Motor neuron (in vitro differentiated cells): ENCODE measurements at regions of chr15 and their contacts with region 1.

Region 1: GRCh38 chr15:78618490-78618934 is 2.3 kb downstream of the CHRNA3 start:
- ATAC-seq: peak; percentile 20 to 78 (median 66)
- H3K4me3 ChIP-seq: no peak overlapping the region
- H3K27ac ChIP-seq: no peak overlapping the region
- H3K4me1 ChIP-seq: peaks cover 3 to 7% of the 10 kb centered on the region in 2 donors

Region 2: GRCh38 chr15:78709263-78709882 is 90.9 kb after region 1 on chr15:
- in situ Hi-C with region 1: loop called in 6 of 9 experiments (anchors 5 to 25 kb)
- ATAC-seq: peak; percentile 97 to 100 (median 99)
- H3K4me3 ChIP-seq: no peak overlapping the region
- H3K27ac ChIP-seq: no peak overlapping the region
- H3K4me1 ChIP-seq: peaks cover 0 to 3% of the 10 kb centered on the region in 2 donors

Region 3: GRCh38 chr15:78714890-78715289 is 96.4 kb after region 1 on chr15:
- in situ Hi-C with region 1: loop called in 4 of 9 experiments (anchors 10 to 25 kb)
- ATAC-seq: peak in 3 of 8 experiments; percentile 42 to 51 (median 49)
- H3K4me3 ChIP-seq: no peak overlapping the region
- H3K27ac ChIP-seq: no peak overlapping the region
- H3K4me1 ChIP-seq: peaks cover 0 to 4% of the 10 kb centered on the region in 2 donors

Region 4: DNA sequence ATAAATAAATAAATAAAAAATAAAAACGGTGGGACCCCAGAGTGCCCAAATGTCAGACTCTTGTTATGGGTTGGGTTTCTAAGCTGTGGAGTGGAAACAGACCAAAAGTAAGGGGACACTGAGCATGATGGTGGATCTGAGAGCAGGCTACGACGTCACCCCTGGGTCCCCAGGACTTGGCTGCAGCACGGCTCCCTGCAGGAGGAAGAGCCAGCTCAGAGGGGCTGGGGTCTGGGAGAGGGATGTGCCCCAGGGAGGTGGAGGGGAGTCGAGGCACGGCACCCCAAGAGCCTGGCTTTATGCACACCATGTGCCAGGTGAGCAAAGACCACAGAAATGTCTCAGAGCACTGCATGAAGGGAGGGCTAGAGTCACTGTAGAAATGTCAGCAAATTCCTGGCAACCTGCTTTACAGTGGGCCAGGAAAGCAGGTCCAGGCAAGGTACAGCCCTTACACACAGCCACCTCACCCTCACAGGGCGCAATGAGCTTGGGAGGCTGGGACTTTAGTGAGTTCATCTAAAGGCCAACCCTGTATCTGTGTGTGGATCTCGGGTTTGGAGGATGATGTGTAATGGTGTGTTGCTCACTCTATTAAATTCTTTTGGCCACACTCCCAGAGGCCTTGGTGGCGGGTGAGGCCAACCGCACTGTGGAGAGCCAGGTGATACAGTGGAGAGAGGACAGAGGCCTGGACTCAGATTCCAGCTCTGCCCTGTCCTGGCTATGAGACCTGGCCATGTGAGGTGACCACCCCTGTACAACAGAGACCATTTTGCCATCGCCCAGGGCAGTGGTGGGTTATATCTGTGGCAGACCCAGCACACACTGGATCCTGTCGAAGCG is 312.3 kb after region 1 on chr15:
- in situ Hi-C with region 1: no loop called
- ATAC-seq: peak in 7 of 8 experiments; percentile 5 to 87 (median 22)
- H3K4me3 ChIP-seq: no peak overlapping the region
- H3K27ac ChIP-seq: no peak overlapping the region
- H3K4me1 ChIP-seq: no peaks in the 10 kb centered on the region